Prostate gland (tissue), 2 donors: ENCODE measurements at regions of chr21 and their contacts with region 1.

Region 1: DNA sequence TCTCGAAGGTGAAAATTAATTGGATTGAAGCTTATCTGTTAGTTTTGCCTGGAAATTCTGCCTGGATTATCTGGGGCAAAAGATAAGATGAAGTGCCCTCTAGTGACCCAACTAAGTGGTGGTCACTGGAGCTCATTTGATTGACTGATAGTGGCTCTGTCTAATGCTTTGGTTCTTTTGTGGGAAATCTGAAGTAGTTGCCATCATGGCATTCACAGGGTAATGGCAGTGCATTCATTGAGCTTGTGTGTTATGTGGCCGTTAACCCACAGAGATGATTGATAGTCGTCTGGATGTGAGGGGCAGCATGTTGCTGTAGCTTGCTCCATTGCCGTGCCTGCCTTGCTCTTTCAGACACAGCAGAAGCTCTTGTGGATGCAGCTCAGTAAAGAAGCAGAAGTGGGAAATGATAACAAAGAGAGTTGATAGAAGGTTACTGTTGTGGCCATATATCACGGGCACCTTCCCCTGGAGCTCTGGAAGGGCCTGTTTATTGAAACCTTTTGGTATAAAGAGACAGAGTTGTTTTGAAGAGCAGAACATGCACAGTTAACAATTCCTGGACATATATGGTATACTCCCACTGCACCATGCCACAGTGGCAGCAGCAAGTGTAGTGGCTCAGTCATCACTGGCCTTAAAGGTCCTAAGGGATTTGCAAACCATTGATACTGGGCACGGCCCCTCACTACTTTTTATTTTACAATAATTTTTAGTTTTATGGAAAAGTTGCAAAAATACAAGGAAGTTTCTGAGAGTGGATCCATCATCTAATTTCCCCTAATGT is 42.0 kb downstream of the CXADR start:
- DNase-seq: no peak
- H3K4me3 ChIP-seq: no peak overlapping the region
- H3K27ac ChIP-seq: no peak overlapping the region
- H3K4me1 ChIP-seq: no peaks in the 10 kb centered on the region
- H3K27me3 ChIP-seq: no peaks in the 10 kb centered on the region
- CTCF ChIP-seq: peak in 3 of 4 experiments; percentile 10 to 31 (median 15)
- POLR2A ChIP-seq: no peak

Region 2: GRCh38 chr21:17491716-17492414 is 63.0 kb before region 1 on chr21:
- intact Hi-C with region 1: loop called (anchors 10 kb)
- DNase-seq: peak; percentile 23
- H3K4me3 ChIP-seq: no peak overlapping the region
- H3K27ac ChIP-seq: no peak overlapping the region
- H3K4me1 ChIP-seq: no peaks in the 10 kb centered on the region
- H3K27me3 ChIP-seq: no peaks in the 10 kb centered on the region
- CTCF ChIP-seq: no peak
- POLR2A ChIP-seq: no peak

Region 3: DNA sequence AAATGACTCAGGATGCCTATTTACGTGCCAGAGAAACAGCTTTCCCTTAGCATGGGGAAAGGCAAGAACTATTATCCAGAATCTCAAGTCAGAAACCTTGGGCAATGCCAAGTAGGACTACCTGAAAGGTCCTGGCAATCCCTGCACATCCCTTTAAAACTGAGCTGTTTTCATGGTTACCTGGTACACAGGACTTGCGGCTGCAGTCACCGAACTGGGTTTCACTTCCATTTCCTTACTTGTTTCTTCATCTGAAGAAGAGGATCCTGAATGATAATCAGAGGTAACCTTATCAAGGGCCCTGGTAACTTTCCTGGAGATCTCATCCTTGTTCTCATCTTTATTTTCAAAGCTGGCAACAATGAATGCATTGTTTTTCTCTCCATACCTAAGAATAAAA is 43.6 kb after region 1 on chr21:
- intact Hi-C with region 1: no loop called
- DNase-seq: no peak
- H3K4me3 ChIP-seq: no peak overlapping the region
- H3K27ac ChIP-seq: no peak overlapping the region
- H3K4me1 ChIP-seq: no peaks in the 10 kb centered on the region
- H3K27me3 ChIP-seq: no peaks in the 10 kb centered on the region
- CTCF ChIP-seq: no peak
- POLR2A ChIP-seq: no peak